ENCODE measurements at regions of chr3 and their contacts with region 1.

Region 1: GRCh38 chr3:186930641-186931531 is 560 bp downstream of the ST6GAL1 start:
- DNase-seq: peak; percentile 23 to 88 (median 72)
- ATAC-seq: peak; percentile 77
- H3K4me3 ChIP-seq: peak overlapping the region; percentile 83 to 94
- H3K4me3 Mint-ChIP-seq: peak overlapping the region; percentile 99
- H3K27ac ChIP-seq: peak overlapping the region; percentile 81 to 83
- H3K27ac Mint-ChIP-seq: peak overlapping the region; percentile 95
- H3K4me1 ChIP-seq: peaks cover 17% of the 10 kb centered on the region
- H3K4me1 Mint-ChIP-seq: peaks cover 38% of the 10 kb centered on the region
- H3K27me3 ChIP-seq: no peaks in the 10 kb centered on the region
- H3K27me3 Mint-ChIP-seq: no peaks in the 10 kb centered on the region
- CTCF ChIP-seq: no peak

Region 2: GRCh38 chr3:186783073-186783730 is 147.7 kb before region 1 on chr3 and contains the start of gene EIF4A2:
- CTCF ChIA-PET with region 1: no interaction called
- POLR2A ChIA-PET with region 1: interaction called, 12 read pairs
- intact Hi-C with region 1: loop called in 1 of 2 experiments (anchors 2 kb)
- DNase-seq: peak; percentile 79 to 96 (median 88)
- ATAC-seq: peak; percentile 67
- H3K4me3 ChIP-seq: peak within 1 kb of the TSS; percentile 90 to 95
- H3K4me3 Mint-ChIP-seq: peak within 1 kb of the TSS; percentile 99
- H3K27ac ChIP-seq: peak within 1 kb of the TSS; percentile 93 to 97
- H3K27ac Mint-ChIP-seq: peak within 1 kb of the TSS; percentile 99
- H3K4me1 ChIP-seq: peaks cover 38% of the 10 kb centered on the region
- H3K4me1 Mint-ChIP-seq: peaks cover 52% of the 10 kb centered on the region
- H3K27me3 ChIP-seq: no peaks in the 10 kb centered on the region
- H3K27me3 Mint-ChIP-seq: no peaks in the 10 kb centered on the region
- CTCF ChIP-seq: no peak
- total RNA-seq, gene EIF4A2: 934 to 978 TPM

Region 3: GRCh38 chr3:186909078-186909853 is 21.6 kb before region 1 on chr3:
- CTCF ChIA-PET with region 1: interaction called, 27 read pairs
- POLR2A ChIA-PET with region 1: interaction called, 39 read pairs
- intact Hi-C with region 1: loop called (anchors 1 to 2 kb)
- DNase-seq: peak; percentile 60 to 91 (median 87)
- ATAC-seq: peak; percentile 91
- H3K4me3 ChIP-seq: peak overlapping the region; percentile 23 to 43
- H3K4me3 Mint-ChIP-seq: peak overlapping the region; percentile 72
- H3K27ac ChIP-seq: peak overlapping the region; percentile 53 to 69
- H3K27ac Mint-ChIP-seq: peak overlapping the region; percentile 95
- H3K4me1 ChIP-seq: peaks cover 17% of the 10 kb centered on the region
- H3K4me1 Mint-ChIP-seq: peaks cover 34% of the 10 kb centered on the region
- H3K27me3 ChIP-seq: no peaks in the 10 kb centered on the region
- H3K27me3 Mint-ChIP-seq: no peaks in the 10 kb centered on the region
- CTCF ChIP-seq: no peak

Region 4: DNA sequence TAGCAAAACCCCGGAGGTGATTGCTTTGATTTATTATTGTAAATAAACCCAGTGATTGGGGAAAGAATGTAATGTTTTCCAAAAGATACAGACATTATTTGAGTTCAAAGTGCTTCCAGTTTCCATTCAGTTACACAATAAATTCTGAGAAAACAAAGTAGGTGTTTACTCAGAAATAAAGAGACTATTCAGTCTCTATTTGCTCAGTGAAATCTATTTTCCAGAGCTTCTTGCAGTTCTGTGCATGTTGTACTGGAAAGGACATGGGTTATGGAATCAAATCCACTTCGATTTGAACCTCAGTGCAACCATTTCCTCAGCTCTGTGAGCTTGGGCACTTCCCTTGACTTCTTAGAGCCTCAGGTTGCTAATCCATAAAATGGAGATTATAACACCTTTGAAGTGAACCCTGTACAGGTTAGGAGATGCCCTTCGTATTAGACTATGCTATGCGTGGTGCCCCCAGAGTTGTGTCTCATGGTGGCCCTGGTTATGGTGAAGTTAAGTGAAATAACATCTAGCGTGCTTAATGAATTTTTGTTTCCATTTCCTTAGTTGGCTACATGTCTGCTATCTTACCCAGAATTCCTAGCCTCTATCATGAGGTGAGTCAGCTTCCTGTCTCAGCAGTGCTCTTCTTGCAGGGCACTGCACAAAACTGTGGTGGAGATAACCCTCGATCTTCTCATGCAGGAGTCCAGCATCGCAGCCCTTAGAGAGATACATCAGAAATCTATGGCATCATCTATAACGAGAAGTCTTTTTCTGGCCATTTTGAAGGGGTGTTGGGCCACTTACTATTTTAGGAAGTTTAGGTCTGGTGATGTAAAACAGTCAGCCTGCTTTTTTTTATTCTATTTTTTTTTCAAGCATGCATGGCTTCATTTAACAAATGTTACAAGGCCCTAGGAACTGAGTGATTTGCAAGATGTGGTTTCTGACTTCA is 110.7 kb after region 1 on chr3:
- CTCF ChIA-PET with region 1: interaction called, 5 read pairs
- POLR2A ChIA-PET with region 1: interaction called, 7 read pairs
- intact Hi-C with region 1: loop called in 1 of 2 experiments (anchors 1 kb)
- DNase-seq: peak in 8 of 9 experiments; percentile 38 to 84 (median 62)
- ATAC-seq: peak; percentile 95
- H3K4me3 ChIP-seq: peak overlapping the region in 1 of 2 experiments; percentile 5
- H3K4me3 Mint-ChIP-seq: peak overlapping the region; percentile 49
- H3K27ac ChIP-seq: peak overlapping the region; percentile 44 to 86
- H3K27ac Mint-ChIP-seq: peak overlapping the region; percentile 95
- H3K4me1 ChIP-seq: peaks cover 80% of the 10 kb centered on the region
- H3K4me1 Mint-ChIP-seq: peaks cover 82% of the 10 kb centered on the region
- H3K27me3 ChIP-seq: no peaks in the 10 kb centered on the region
- H3K27me3 Mint-ChIP-seq: no peaks in the 10 kb centered on the region
- CTCF ChIP-seq: no peak

Region 5: DNA sequence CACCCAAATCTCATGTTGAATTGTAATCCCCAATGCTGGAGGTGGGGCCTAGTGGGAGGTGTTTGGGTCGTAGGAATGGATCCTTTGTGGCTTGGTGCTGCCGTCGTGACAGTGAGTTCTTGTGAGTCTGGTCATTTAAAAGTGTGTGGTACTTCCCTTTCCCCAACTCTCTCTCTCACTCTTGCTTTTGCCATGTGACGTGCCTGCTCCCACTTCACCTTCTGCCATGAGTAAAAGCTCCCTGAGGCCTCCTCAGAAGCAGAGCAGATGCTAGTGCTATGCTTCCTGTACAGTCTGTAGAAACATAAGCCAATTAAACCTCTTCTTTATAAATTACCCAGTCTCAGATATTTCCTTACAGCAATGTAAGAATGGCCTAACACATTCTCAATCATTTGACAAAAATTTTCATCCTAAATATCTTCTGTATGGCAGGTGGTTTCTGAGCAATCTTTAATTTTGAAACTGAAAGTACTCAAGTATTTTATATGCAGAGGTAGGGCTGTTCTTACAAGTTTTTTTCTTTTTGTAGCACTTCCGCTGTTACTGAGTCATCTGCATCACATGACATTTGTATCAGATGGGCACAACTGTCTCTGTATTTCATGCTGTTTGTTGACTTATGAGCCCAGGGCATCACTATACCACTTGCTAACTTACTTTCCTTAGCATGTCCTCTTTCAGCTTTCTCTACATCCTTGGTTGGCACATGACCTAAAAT is 199.6 kb after region 1 on chr3:
- CTCF ChIA-PET with region 1: no interaction called
- POLR2A ChIA-PET with region 1: no interaction called
- intact Hi-C with region 1: loop called (anchors 5 kb)
- DNase-seq: peak in 6 of 9 experiments; percentile 17 to 92 (median 36)
- ATAC-seq: peak; percentile 95
- H3K4me3 ChIP-seq: no peak overlapping the region
- H3K4me3 Mint-ChIP-seq: peak overlapping the region; percentile 51
- H3K27ac ChIP-seq: peak overlapping the region; percentile 38 to 95
- H3K27ac Mint-ChIP-seq: peak overlapping the region; percentile 96
- H3K4me1 ChIP-seq: peaks cover 17% of the 10 kb centered on the region
- H3K4me1 Mint-ChIP-seq: peaks cover 34% of the 10 kb centered on the region
- H3K27me3 ChIP-seq: no peaks in the 10 kb centered on the region
- H3K27me3 Mint-ChIP-seq: no peaks in the 10 kb centered on the region
- CTCF ChIP-seq: no peak

Measured in CD8-positive, alpha-beta T cell (primary cell).